ENCODE measurements at regions of chr12 and their contacts with region 1.

Region 1: GRCh38 chr12:46675736-46676135 is 150.1 kb downstream of the SLC38A4 start:
- DNase-seq: no peak
- H3K4me3 ChIP-seq: no peak overlapping the region
- H3K27ac ChIP-seq: no peak overlapping the region
- H3K4me1 ChIP-seq: peaks cover 0 to 5% (median 0%) of the 10 kb centered on the region in 4 experiments; a peak in 3 of 7 replicates
- H3K27me3 ChIP-seq: no peaks in the 10 kb centered on the region
- CTCF ChIP-seq: peak in 2 of 3 experiments; percentile 21 to 37; a peak in 3 of 4 replicates
- EP300 ChIP-seq: no peak
- POLR2A ChIP-seq: no peak
- RAD21 ChIP-seq: peak; percentile 40 to 53

Region 2: GRCh38 chr12:46342562-46343033 is 333.1 kb before region 1 on chr12:
- CTCF ChIA-PET with region 1: interaction called, 11 read pairs
- POLR2A ChIA-PET with region 1: no interaction called
- DNase-seq: peak in 1 of 2 experiments; percentile 59
- H3K4me3 ChIP-seq: no peak overlapping the region
- H3K27ac ChIP-seq: no peak overlapping the region
- H3K4me1 ChIP-seq: peaks cover 0 to 3% (median 0%) of the 10 kb centered on the region in 4 experiments; a peak in 1 of 7 replicates
- H3K27me3 ChIP-seq: no peaks in the 10 kb centered on the region
- CTCF ChIP-seq: peak in 2 of 3 experiments; percentile 77 to 78; a peak in 3 of 4 replicates
- EP300 ChIP-seq: no peak
- POLR2A ChIP-seq: no peak
- RAD21 ChIP-seq: peak; percentile 94

Region 3: DNA sequence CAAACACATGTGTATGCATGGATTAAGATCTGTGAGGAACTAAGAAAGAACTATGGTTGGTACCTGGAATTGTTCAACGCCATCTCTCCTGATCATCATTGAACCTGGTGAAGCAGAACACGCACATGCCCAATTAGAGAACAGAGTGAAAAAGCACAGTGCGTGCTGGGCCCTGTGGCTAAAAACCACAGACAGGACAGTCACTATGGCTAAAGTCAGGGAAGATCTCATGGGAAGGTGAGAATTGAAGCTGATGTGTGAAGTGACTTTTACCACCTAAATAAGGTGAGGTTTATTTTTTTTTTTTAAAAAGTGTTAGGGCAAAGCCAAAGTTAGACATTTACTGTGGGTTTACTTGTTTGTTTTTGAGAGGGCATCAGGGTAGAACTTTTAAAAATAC is 65.0 kb before region 1 on chr12:
- CTCF ChIA-PET with region 1: no interaction called
- POLR2A ChIA-PET with region 1: no interaction called
- DNase-seq: no peak
- H3K4me3 ChIP-seq: no peak overlapping the region
- H3K27ac ChIP-seq: no peak overlapping the region
- H3K4me1 ChIP-seq: 0 out of 7 replicates have a peak, but pooled peaks cover 0 to 2% (median 0%) of the 10 kb centered on the region in 4 experiments
- H3K27me3 ChIP-seq: no peaks in the 10 kb centered on the region
- CTCF ChIP-seq: no peak
- EP300 ChIP-seq: no peak
- POLR2A ChIP-seq: no peak
- RAD21 ChIP-seq: no peak

Region 4: DNA sequence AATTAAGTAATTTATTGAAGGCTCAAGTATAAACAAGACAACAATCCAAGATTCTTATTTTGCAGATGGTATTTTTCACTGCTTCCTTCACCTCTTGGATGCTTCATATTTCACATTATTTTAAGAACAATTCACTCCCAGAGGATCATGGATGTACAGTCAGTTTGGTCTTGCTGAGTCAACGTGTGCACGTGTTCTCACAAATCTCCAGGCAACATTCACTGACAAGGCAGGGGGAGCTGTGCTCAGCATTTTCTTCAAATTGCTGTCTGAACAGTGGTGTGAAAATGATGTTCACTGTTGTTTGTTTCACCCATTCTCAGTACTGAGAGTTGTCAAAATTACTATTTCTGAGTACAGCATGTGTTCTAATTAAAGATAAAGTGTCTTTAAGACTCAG is 268.4 kb after region 1 on chr12:
- CTCF ChIA-PET with region 1: no interaction called
- POLR2A ChIA-PET with region 1: no interaction called
- DNase-seq: no peak
- H3K4me3 ChIP-seq: no peak overlapping the region
- H3K27ac ChIP-seq: no peak overlapping the region
- H3K4me1 ChIP-seq: no peaks in the 10 kb centered on the region
- H3K27me3 ChIP-seq: no peaks in the 10 kb centered on the region
- CTCF ChIP-seq: peak in 1 of 3 experiments; percentile 10; a peak in 1 of 4 replicates
- EP300 ChIP-seq: no peak
- POLR2A ChIP-seq: no peak
- RAD21 ChIP-seq: peak in 1 of 2 experiments; percentile 10; a peak in 1 of 4 replicates

Measured in H1 (cell line).